ENCODE measurements at regions of chr19 and their contacts with region 1.

Region 1: DNA sequence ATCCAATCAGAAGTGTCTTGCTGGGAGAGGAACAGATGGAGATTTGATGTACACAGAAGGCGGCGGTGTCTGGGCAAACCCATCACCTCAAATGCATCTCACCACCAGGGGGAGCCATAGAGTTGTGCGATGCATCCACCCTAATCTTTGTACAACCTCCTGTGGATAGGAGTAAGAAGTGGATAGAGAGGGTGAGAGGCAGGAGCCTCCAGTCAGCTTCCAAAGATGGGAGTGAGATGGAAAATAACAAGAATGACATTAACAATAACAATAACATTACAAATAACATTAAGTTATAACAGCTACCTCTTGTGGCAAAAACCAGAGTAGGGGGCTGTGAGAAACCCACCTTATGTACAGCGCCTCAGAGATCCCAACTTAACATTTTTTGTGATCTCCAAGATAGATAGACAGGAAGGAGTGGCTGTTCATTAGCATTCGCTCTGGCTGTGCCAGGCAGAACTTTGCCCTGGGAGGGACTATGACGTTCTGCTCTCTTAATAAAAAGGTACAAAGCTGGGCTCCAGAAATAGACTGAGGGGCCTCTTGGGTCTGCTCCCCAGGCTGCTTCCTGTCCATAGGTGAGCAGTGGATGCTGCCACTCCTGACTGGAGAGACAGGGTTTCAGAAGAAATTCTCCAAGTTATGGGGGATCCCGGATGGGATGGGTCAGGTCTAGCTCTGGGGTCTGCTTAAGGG is 5.2 kb upstream of the CEACAM18 start:
- DNase-seq: peak; percentile 59 to 62
- ATAC-seq: peak in 1 of 4 donors; percentile 73
- H3K4me3 ChIP-seq: no peak overlapping the region
- H3K27ac ChIP-seq: no peak overlapping the region
- H3K4me1 ChIP-seq: no peaks in the 10 kb centered on the region
- H3K27me3 ChIP-seq: no peaks in the 10 kb centered on the region
- CTCF ChIP-seq: peak; percentile 80

Region 2: GRCh38 chr19:51651216-51651846 is 178.2 kb after region 1 on chr19:
- intact Hi-C with region 1: loop called (anchors 5 to 10 kb)
- DNase-seq: no peak
- ATAC-seq: no peak
- H3K4me3 ChIP-seq: no peak overlapping the region
- H3K27ac ChIP-seq: no peak overlapping the region
- H3K4me1 ChIP-seq: no peaks in the 10 kb centered on the region
- H3K27me3 ChIP-seq: peaks cover 0 to 4% (median 2%) of the 10 kb centered on the region in 3 donors
- CTCF ChIP-seq: no peak

Region 3: GRCh38 chr19:51777570-51778462 is 304.7 kb after region 1 on chr19:
- intact Hi-C with region 1: loop called in 1 of 2 experiments (anchors 5 kb)
- DNase-seq: peak; percentile 44 to 68
- ATAC-seq: peak in 3 of 4 donors; percentile 47 to 59 (median 58)
- H3K4me3 ChIP-seq: no peak overlapping the region
- H3K27ac ChIP-seq: no peak overlapping the region
- H3K4me1 ChIP-seq: no peaks in the 10 kb centered on the region
- H3K27me3 ChIP-seq: peaks cover 0 to 19% (median 0%) of the 10 kb centered on the region in 3 donors
- CTCF ChIP-seq: peak; percentile 68